ENCODE measurements at regions of chr2 and their contacts with region 1.

Region 1: GRCh38 chr2:152627351-152627957 is 89.8 kb downstream of the PRPF40A start:
- DNase-seq: peak; percentile 18
- ATAC-seq: 0 out of 2 replicates have a peak, but pooled peaks have one; percentile 54
- H3K4me3 ChIP-seq: no peak overlapping the region
- H3K27ac ChIP-seq: no peak overlapping the region
- H3K4me1 ChIP-seq: no peaks in the 10 kb centered on the region
- H3K27me3 ChIP-seq: no peaks in the 10 kb centered on the region
- CTCF ChIP-seq: peak; percentile 53 to 65 (median 59); a peak in 5 of 6 replicates
- POLR2A ChIP-seq: no peak
- RAD21 ChIP-seq: peak; percentile 83

Region 2: DNA sequence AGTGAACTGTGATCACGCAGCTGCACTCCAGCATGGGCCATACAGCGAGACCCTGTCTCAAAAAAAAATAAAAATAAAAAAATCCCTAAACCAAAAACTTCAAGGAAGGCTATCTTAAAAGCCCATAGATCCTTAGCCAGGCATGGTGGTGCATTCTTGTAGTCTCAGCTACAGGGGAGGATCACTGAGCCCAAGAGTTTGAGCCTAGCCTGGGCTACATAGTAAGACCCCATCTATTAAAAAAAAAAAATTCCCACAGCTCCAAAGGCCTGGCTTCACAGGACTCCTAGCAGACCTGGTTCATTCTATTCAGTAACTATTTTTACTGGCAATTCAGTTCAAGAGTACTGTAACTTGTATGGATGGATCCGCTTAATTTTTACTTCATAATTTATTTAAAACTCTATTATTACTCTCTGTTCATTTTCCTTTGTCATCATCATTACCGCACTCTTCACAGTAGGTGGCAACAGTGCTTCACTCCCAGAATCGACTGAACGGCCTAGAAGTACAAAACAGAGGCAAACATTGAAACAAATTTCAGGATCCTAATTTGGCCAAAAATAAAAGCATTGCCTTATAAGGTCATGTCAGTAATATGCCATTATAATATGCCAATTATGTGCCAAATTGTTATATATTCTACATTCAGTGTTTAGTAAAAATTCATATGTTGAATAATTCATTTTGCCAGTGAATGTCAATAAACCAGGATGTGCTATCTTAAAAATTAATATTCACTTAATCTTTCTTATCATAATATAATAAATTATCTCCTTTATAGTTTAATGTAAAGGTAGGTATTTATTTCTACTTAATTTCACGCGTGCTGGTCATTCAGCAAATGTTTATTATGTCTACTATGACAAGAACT is 437.6 kb before region 1 on chr2:
- CTCF ChIA-PET with region 1: no interaction called
- POLR2A ChIA-PET with region 1: no interaction called
- RAD21 ChIA-PET with region 1: no interaction called
- intact Hi-C with region 1: loop called (anchors 1 kb)
- DNase-seq: peak; percentile 48
- ATAC-seq: peak; percentile 95
- H3K4me3 ChIP-seq: no peak overlapping the region
- H3K27ac ChIP-seq: no peak overlapping the region
- H3K4me1 ChIP-seq: no peaks in the 10 kb centered on the region
- H3K27me3 ChIP-seq: no peaks in the 10 kb centered on the region
- CTCF ChIP-seq: peak; percentile 69 to 92 (median 78)
- POLR2A ChIP-seq: no peak
- RAD21 ChIP-seq: peak; percentile 96

Measured in HCT116 (cell line).